PC-9 (cell line): ENCODE measurements at regions of chr6 and their contacts with region 1.

Region 1: GRCh38 chr6:79570129-79571029 is 33.1 kb upstream of the LCA5 start:
- DNase-seq: peak; percentile 86 to 95
- H3K4me3 ChIP-seq: peak overlapping the region; percentile 46; the same call in 1 of the 2 replicates
- H3K27ac ChIP-seq: peak overlapping the region; percentile 84
- H3K4me1 ChIP-seq: peaks cover 55% of the 10 kb centered on the region
- H3K27me3 ChIP-seq: no peaks in the 10 kb centered on the region
- CTCF ChIP-seq: peak; percentile 70

Region 2: DNA sequence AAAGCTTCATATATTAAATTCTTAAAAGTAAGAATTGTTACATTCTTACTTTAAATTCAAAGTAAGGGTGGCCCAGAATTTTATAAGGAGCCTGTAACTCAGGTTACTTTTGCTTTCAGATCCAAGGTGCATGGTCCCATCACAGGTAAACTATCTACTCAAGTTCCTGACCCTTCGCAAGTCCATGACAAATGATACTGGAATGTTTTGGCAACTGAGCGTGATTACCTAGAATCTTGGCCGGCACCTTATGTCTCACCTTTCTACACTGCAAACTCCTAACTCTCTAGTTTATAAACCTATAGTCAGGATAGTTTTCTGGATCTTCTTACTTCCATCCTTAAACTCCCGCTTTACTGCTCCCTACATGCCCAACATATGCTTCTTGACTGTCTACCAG is 268.0 kb before region 1 on chr6:
- CTCF ChIA-PET with region 1: no interaction called
- POLR2A ChIA-PET with region 1: no interaction called
- intact Hi-C with region 1: loop called (anchors 5 kb)
- DNase-seq: peak; percentile 48 to 84
- H3K4me3 ChIP-seq: no peak overlapping the region
- H3K27ac ChIP-seq: peak overlapping the region; percentile 65
- H3K4me1 ChIP-seq: peaks cover 37% of the 10 kb centered on the region
- H3K27me3 ChIP-seq: no peaks in the 10 kb centered on the region
- CTCF ChIP-seq: no peak

Region 3: GRCh38 chr6:79614754-79615261 is 44.4 kb after region 1 on chr6:
- CTCF ChIA-PET with region 1: no interaction called
- POLR2A ChIA-PET with region 1: no interaction called
- intact Hi-C with region 1: loop called (anchors 1 kb)
- DNase-seq: no peak
- H3K4me3 ChIP-seq: no peak overlapping the region
- H3K27ac ChIP-seq: no peak overlapping the region
- H3K4me1 ChIP-seq: peaks cover 25% of the 10 kb centered on the region; the same call in 1 of the 2 replicates
- H3K27me3 ChIP-seq: no peaks in the 10 kb centered on the region
- CTCF ChIP-seq: no peak

Region 4: DNA sequence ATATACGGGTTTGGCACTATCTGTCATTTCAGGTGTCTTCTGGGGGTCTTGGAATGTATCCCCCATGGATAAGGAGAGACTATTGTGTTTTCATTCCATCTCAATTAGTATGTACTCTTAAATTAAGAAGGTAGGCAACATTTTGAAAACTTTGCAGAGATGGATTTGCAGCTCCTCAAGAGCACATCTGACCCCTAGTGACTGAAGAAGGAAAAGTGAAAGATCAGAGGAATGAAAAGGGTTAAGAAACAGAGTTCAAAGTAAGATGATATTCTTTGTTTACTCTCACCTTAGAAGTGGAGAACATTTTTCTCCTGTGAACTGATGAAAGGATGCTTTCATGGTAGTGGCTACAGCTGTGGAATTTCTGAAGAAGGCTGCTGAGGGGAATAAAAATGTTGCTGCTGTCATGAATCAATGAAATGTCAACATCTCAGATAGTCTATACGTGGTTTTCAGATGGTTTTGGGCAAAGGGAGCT is 102.3 kb after region 1 on chr6:
- CTCF ChIA-PET with region 1: interaction called, 4 read pairs
- POLR2A ChIA-PET with region 1: no interaction called
- intact Hi-C with region 1: loop called (anchors 1 kb)
- DNase-seq: peak; percentile 2 to 48
- H3K4me3 ChIP-seq: no peak overlapping the region
- H3K27ac ChIP-seq: peak overlapping the region; percentile 76
- H3K4me1 ChIP-seq: peaks cover 31% of the 10 kb centered on the region
- H3K27me3 ChIP-seq: no peaks in the 10 kb centered on the region
- CTCF ChIP-seq: peak; percentile 61; the same call in 1 of the 2 replicates

Region 5: DNA sequence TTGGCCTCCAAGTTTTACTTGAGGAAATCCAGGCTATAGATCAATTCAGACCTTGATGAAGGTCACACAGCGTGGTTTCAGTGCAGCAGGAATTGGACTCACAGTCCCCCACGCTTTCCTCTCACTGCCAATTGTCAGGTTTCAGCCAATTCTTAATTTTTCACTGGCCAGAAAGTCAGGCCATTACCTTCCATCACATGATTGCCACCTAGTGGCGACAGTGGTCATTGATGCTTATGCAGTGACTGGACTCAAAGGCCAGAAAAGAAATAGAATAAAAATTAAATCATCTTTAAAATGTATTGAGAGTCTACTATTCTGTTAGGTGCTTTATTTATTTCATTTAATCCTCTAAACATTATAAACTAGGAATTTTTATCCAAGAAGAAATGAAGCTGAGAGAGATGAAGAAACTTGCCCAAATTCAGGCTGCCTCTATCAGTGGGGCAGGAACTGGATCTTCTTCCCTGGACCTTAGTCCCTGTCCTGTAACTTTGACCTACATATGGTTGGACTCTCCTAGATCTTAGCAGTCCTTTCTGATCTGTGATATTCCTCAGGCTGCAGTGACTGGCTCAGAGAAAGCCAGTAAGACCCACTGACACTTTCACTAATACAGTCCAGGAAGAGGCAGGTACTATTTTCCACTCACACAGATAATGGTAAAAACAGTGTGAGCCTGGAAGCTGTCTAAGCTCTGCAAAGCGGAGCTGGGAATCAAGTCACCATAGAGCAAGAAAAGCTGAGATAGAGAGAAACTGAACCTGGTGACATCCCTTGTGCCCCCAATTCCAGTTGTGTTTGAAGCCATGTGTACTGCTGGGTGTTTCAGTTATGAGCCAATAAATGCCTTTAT is 243.7 kb after region 1 on chr6:
- CTCF ChIA-PET with region 1: no interaction called
- POLR2A ChIA-PET with region 1: no interaction called
- intact Hi-C with region 1: loop called (anchors 5 kb)
- DNase-seq: peak in 1 of 2 experiments; percentile 65
- H3K4me3 ChIP-seq: no peak overlapping the region
- H3K27ac ChIP-seq: no peak overlapping the region
- H3K4me1 ChIP-seq: no peaks in the 10 kb centered on the region
- H3K27me3 ChIP-seq: no peaks in the 10 kb centered on the region
- CTCF ChIP-seq: peak; percentile 85